ENCODE measurements at regions of chr17 and their contacts with region 1.

Region 1: DNA sequence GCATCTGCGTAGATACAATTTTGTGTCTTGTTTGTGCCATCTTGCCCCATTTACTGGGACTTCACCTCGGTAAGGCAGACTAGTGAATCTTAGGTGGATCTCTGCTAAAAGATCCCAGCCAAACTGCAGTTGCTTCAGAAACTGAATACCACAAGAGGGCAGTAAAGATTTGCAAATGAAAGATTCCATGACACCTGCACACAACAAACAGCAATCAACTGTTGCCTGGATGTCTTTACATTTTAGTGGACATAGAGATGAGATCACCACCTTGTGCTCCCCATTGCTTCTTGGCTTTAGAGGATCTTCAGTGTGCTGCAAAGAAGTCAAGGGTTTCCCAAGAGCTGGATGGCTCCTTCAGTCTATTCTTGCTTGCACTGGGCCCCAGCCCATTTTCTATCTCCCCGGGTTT is 119.2 kb upstream of the CACNG5 start:
- DNase-seq: no peak
- ATAC-seq: no peak
- H3K4me3 Mint-ChIP-seq: no peak overlapping the region
- H3K27ac Mint-ChIP-seq: no peak overlapping the region
- H3K4me1 Mint-ChIP-seq: no peaks in the 10 kb centered on the region
- H3K27me3 Mint-ChIP-seq: peaks cover 10% of the 10 kb centered on the region
- CTCF ChIP-seq: no peak

Region 2: GRCh38 chr17:66727639-66728570 is 12.2 kb after region 1 on chr17:
- CTCF ChIA-PET with region 1: no interaction called
- POLR2A ChIA-PET with region 1: no interaction called
- intact Hi-C with region 1: no loop called
- DNase-seq: no peak
- ATAC-seq: peak; percentile 28
- H3K4me3 Mint-ChIP-seq: no peak overlapping the region
- H3K27ac Mint-ChIP-seq: no peak overlapping the region
- H3K4me1 Mint-ChIP-seq: no peaks in the 10 kb centered on the region
- H3K27me3 Mint-ChIP-seq: peaks cover 4% of the 10 kb centered on the region
- CTCF ChIP-seq: no peak

Region 3: DNA sequence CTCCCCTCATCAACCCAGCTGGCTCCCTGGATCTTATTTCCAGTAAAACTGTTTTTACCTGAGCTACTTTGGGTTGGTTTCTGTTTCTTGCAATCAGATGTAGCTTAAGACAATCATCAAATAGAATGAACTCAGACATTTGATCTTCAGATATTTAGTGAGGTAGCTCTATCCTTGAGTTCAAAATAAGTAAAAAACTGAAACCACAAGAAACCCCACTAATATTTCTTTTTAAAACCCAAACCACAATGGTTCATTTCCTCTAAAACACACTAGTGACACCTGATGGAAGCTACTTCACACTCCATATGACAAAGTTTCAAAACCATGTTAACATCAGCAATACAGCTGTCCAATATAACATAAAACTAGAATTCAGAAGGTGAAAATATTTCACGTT is 366.4 kb after region 1 on chr17:
- CTCF ChIA-PET with region 1: no interaction called
- POLR2A ChIA-PET with region 1: no interaction called
- intact Hi-C with region 1: loop called (anchors 10 kb)
- DNase-seq: no peak
- ATAC-seq: no peak
- H3K4me3 Mint-ChIP-seq: no peak overlapping the region
- H3K27ac Mint-ChIP-seq: no peak overlapping the region
- H3K4me1 Mint-ChIP-seq: peaks cover 19% of the 10 kb centered on the region
- H3K27me3 Mint-ChIP-seq: no peaks in the 10 kb centered on the region
- CTCF ChIP-seq: no peak

Measured in activated B cell treated with CpG ODN at 0.5 μM for 24 hours (primary cell).